Activated CD4-positive, alpha-beta T cell treated with anti-CD3 and anti-CD28 coated beads, Interleukin-2, amount 10 ng/mL, durations not matched to agents 24 days and 14 days (primary cell): ENCODE measurements at regions of chr18 and their contacts with region 1.

Region 1: DNA sequence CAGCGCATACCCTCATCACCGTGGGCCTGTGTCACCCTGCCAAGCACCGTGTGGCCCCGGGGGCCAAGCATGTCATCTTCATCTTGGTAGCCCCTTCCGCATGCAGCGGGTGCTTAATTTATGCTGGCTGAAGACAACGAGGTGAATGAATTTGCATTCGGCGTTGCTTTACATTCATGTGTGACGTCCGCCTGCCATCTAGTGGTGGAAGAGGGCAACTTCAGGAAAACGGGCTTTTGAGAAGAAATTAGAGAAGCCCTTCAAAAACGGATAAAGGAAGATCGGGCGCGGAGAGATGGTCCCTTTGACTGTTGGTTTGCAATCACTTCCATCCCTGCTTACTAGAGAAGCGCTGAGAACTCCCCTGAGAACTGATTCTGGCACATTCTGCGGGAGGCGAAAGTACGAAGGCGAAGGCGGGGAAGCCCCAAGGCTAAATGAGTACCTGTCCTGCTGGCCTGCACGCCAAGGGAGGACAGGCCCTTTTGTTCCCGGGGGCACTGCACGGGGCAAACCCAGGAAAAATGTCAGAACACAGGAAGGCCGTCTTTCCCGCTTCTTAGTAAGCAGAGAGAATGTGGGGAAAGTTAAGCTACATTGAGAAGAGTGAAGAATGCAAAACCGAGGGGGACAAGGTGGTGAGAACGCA is 145.9 kb downstream of the ZNF516 start:
- DNase-seq: peak; percentile 90
- H3K4me3 Mint-ChIP-seq: peak overlapping the region; percentile 6
- H3K27ac Mint-ChIP-seq: no peak overlapping the region
- H3K4me1 Mint-ChIP-seq: peaks cover 2% of the 10 kb centered on the region
- H3K27me3 Mint-ChIP-seq: no peaks in the 10 kb centered on the region

Region 2: GRCh38 chr18:75727456-75727855 is 621.7 kb before region 1 on chr18:
- intact Hi-C with region 1: loop called (anchors 10 kb)
- DNase-seq: peak; percentile 74
- H3K4me3 Mint-ChIP-seq: no peak overlapping the region
- H3K27ac Mint-ChIP-seq: no peak overlapping the region
- H3K4me1 Mint-ChIP-seq: no peaks in the 10 kb centered on the region
- H3K27me3 Mint-ChIP-seq: peaks cover 2% of the 10 kb centered on the region